Activated T-helper 2 cell treated with anti-CD3 and anti-CD28 coated beads, Interferon-gamma antibody, Interleukin-2, Interleukin-4, amounts not matched to agents 10 μg/mL and 5 μg/mL and 100 μg/mL, durations not matched to agents 14 hours and 24 hours and 36 hours (primary cell): ENCODE measurements at regions of chr10 and their contacts with region 1.

Region 1: GRCh38 chr10:114541081-114541796 is 116.8 kb downstream of the ABLIM1 start:
- DNase-seq: peak; percentile 80
- H3K4me3 Mint-ChIP-seq: peak overlapping the region; percentile 66
- H3K27ac Mint-ChIP-seq: peak overlapping the region; percentile 100
- H3K4me1 Mint-ChIP-seq: peaks cover 79% of the 10 kb centered on the region
- H3K27me3 Mint-ChIP-seq: no peaks in the 10 kb centered on the region

Region 2: GRCh38 chr10:114337505-114338462 is 203.5 kb before region 1 on chr10:
- intact Hi-C with region 1: loop called (anchors 2 kb)
- DNase-seq: no peak
- H3K4me3 Mint-ChIP-seq: no peak overlapping the region
- H3K27ac Mint-ChIP-seq: peak overlapping the region; percentile 46
- H3K4me1 Mint-ChIP-seq: peaks cover 33% of the 10 kb centered on the region
- H3K27me3 Mint-ChIP-seq: peaks cover 2% of the 10 kb centered on the region

Region 3: GRCh38 chr10:114458955-114459354 is 82.3 kb before region 1 on chr10:
- intact Hi-C with region 1: no loop called
- DNase-seq: no peak
- H3K4me3 Mint-ChIP-seq: no peak overlapping the region
- H3K27ac Mint-ChIP-seq: peak overlapping the region; percentile 24
- H3K4me1 Mint-ChIP-seq: peaks cover 15% of the 10 kb centered on the region
- H3K27me3 Mint-ChIP-seq: no peaks in the 10 kb centered on the region

Region 4: GRCh38 chr10:114470956-114471905 is 70.0 kb before region 1 on chr10:
- intact Hi-C with region 1: no loop called
- DNase-seq: peak; percentile 48
- H3K4me3 Mint-ChIP-seq: no peak overlapping the region
- H3K27ac Mint-ChIP-seq: no peak overlapping the region
- H3K4me1 Mint-ChIP-seq: peaks cover 15% of the 10 kb centered on the region
- H3K27me3 Mint-ChIP-seq: no peaks in the 10 kb centered on the region

Region 5: GRCh38 chr10:114499630-114500190 is 41.5 kb before region 1 on chr10:
- intact Hi-C with region 1: loop called (anchors 1 kb)
- DNase-seq: peak; percentile 55
- H3K4me3 Mint-ChIP-seq: peak overlapping the region; percentile 53
- H3K27ac Mint-ChIP-seq: peak overlapping the region; percentile 92
- H3K4me1 Mint-ChIP-seq: peaks cover 72% of the 10 kb centered on the region
- H3K27me3 Mint-ChIP-seq: no peaks in the 10 kb centered on the region

Region 6: DNA sequence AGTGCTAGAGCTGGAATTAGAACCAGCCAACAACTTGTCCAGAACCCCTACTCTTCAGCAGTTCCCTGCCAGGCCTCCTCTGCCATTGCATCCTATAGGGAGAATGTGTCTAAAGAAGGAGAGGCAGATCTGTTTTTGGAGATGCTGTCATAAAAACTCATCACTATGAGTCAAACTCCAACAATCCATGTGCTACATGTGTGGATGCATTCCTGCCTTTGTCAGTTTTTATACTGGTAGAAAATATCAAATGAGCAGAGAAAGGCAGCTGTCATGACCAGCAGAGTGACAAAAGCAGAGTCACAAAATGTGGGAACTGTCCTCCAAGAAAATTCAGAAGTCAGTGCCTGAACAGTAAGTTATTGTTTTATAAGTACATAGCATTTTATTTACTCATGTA is 23.8 kb after region 1 on chr10:
- intact Hi-C with region 1: no loop called
- DNase-seq: no peak
- H3K4me3 Mint-ChIP-seq: no peak overlapping the region
- H3K27ac Mint-ChIP-seq: no peak overlapping the region
- H3K4me1 Mint-ChIP-seq: no peaks in the 10 kb centered on the region
- H3K27me3 Mint-ChIP-seq: peaks cover 5% of the 10 kb centered on the region

Region 7: DNA sequence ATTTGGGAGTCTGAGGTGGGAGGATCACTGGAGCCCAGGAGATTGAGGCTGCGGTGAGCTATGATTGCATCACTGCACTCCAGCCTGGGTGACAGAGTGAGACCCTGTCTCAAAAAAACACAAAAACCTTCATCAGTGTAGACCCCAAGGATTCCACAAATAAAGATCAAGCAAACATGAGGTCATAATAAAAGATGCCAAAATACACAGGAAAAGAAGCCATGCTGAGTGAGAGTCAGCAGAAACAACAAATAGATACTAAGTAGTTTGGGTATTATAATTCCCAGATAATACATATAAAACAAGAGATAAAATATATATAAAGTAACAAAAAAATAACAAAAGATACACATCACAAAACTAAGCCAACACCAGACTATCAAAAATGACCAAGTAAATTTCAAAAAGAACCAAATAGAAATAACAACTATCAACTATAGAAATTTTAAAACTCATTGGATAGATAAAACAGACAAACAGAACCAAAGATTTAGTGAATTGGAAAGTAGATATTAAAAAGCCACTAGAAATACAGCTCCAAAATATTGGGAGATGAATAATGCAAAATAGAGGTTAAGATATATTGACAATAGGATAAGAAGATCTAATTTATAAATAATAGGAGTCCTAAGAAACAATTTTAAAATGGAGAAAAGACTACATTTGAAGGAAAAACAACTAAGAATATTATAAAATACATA is 231.4 kb after region 1 on chr10:
- intact Hi-C with region 1: loop called (anchors 5 kb)
- DNase-seq: no peak
- H3K4me3 Mint-ChIP-seq: no peak overlapping the region
- H3K27ac Mint-ChIP-seq: no peak overlapping the region
- H3K4me1 Mint-ChIP-seq: peaks cover 9% of the 10 kb centered on the region
- H3K27me3 Mint-ChIP-seq: peaks cover 47% of the 10 kb centered on the region

Region 8: DNA sequence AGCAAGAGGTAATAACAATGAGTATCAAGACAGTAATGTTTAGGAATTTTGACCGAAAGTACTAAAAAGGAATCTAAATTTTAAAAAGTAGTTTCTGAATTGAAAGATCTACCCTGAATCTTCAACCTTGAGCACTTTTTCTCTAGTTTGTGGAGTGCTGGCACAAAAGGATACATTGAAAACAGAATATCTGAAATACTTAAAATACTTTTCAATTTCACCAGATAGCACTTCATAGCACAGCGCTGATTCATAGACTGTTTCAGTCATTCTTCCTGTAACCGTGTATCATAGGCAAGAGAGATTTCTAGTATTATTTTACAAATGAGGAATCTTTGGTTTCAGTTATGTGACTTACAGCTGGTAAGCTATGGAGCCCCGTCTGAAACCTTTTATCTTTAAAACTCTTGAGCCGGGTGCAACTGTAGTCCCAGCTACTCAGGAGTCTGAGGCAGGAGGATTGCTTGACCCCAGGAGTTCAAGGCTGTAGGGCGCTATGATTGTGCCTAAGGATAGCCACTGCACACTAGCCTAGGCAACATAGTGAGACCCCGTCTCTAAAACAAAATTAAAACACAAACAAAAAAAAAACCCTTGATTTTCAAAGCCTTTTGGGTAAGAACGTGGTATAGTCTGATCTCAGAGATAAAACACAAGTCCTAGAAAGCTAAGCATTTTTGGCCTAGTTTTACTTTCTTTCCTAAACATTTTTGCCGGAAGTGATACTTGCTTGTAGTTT is 315.5 kb after region 1 on chr10:
- intact Hi-C with region 1: no loop called
- DNase-seq: no peak
- H3K4me3 Mint-ChIP-seq: peak overlapping the region; percentile 61
- H3K27ac Mint-ChIP-seq: peak overlapping the region; percentile 90
- H3K4me1 Mint-ChIP-seq: peaks cover 21% of the 10 kb centered on the region
- H3K27me3 Mint-ChIP-seq: no peaks in the 10 kb centered on the region

Region 9: DNA sequence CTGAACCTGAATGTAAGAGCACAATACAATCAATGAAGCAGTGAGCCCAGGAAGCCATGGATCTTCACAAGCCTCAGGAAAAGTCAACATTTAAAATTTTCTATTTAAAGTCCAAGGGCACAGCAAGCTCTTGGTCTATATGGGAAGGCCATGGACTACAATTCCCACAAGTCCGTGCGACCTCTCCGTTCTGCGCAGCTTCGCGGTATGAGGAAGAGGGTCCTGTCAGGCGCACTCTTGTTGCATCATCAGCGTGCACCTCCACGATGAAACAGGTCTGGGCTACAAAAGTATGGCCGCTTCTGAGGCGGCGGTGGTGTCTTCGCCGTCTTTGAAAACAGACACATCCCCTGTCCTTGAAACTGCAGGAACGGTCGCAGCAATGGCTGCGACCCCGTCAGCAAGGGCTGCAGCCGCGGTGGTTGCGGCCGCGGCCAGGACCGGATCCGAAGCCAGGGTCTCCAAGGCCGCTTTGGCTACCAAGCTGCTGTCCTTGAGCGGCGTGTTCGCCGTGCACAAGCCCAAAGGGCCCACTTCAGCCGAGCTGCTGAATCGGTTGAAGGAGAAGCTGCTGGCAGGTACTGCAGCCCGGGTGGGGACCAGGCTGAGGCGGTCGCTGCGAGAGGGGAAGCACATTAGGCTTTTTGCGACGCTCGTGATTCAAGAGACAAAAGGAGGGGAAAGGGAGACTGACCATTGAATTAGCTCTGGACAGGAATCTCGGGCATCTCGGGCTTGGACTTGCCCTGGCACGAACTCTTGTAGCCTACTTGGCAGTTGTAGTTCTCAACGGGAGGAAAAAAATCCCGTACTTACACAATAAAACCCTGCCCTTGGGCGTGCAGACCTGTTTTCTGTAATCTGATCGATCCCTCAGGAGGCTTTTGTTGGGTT is 397.0 kb after region 1 on chr10 and contains the start of gene TRUB1:
- intact Hi-C with region 1: loop called (anchors 5 kb)
- DNase-seq: peak; percentile 80
- H3K4me3 Mint-ChIP-seq: peak within 1 kb of the TSS; percentile 95
- H3K27ac Mint-ChIP-seq: peak within 1 kb of the TSS; percentile 93
- H3K4me1 Mint-ChIP-seq: peaks cover 28% of the 10 kb centered on the region
- H3K27me3 Mint-ChIP-seq: no peaks in the 10 kb centered on the region
- total RNA-seq, gene TRUB1: 20.3 and 21.4 TPM in 2 replicates